ENCODE measurements at regions of chr6 and their contacts with region 1.

Region 1: DNA sequence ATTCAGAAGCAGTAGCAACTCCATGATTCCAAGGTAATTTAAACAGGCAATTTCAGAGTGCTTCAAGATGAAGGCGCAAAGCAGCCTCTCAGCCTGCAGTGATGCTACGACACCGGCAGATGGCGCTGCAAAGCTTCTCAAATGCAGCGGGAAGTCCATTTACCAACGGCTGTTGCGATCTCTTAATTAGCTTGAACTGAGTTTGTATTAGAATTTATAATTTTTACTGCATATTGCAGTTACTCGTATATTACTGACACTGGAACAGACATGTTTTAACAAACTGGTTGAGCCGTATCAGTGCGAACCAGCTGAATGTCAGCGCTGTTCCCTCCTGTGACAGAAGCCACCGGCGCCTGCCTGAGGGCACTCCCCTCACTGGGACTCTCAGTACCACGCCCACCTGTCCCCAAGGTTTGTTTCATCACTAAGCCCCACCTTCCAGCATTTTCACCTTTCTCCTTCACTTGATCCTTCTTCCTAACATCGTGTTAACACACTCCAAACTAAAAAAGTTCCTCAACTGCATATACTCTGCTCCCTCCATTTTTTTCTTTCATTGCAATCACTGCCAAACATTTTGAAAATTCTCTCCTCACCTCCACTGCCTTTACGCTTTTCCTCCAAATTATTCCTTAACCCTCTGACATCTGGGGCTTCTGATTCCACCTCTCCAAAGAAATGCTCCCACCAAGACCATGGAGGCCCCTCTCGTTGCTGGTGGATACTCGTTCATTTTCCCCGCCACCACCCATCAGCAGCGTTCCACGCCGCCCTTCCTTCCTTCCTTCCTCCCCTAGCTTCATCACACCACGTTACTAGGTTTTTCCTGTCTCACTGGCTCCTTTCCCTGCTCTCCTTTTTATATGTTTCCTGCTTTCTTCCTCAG is 14.5 kb downstream of the GNL1 start:
- DNase-seq: peak; percentile 86 to 93 (median 92)
- H3K4me3 ChIP-seq: peak overlapping the region; percentile 31 to 84 (median 66)
- H3K27ac ChIP-seq: no peak overlapping the region
- H3K4me1 ChIP-seq: peaks cover 8 to 20% (median 15%) of the 10 kb centered on the region in 4 experiments
- H3K27me3 ChIP-seq: no peaks in the 10 kb centered on the region

Region 2: GRCh38 chr6:30483677-30484279 is 58.0 kb before region 1 on chr6:
- CTCF ChIA-PET with region 1: interaction called, 259 read pairs
- POLR2A ChIA-PET with region 1: interaction called, 3 read pairs
- DNase-seq: peak; percentile 68 to 79 (median 71)
- H3K4me3 ChIP-seq: no peak overlapping the region
- H3K27ac ChIP-seq: no peak overlapping the region
- H3K4me1 ChIP-seq: peaks cover 7 to 28% (median 19%) of the 10 kb centered on the region in 4 experiments
- H3K27me3 ChIP-seq: peaks cover 4 to 42% (median 26%) of the 10 kb centered on the region in 5 experiments

Region 3: GRCh38 chr6:30500421-30501355 is 41.1 kb before region 1 on chr6:
- CTCF ChIA-PET with region 1: interaction called, 151 read pairs
- POLR2A ChIA-PET with region 1: interaction called, 3 read pairs
- DNase-seq: peak in 1 of 3 donors; percentile 45
- H3K4me3 ChIP-seq: peak overlapping the region in 1 of 7 experiments; percentile 1
- H3K27ac ChIP-seq: no peak overlapping the region
- H3K4me1 ChIP-seq: peaks cover 6 to 33% (median 22%) of the 10 kb centered on the region in 4 experiments
- H3K27me3 ChIP-seq: no peaks in the 10 kb centered on the region

Region 4: DNA sequence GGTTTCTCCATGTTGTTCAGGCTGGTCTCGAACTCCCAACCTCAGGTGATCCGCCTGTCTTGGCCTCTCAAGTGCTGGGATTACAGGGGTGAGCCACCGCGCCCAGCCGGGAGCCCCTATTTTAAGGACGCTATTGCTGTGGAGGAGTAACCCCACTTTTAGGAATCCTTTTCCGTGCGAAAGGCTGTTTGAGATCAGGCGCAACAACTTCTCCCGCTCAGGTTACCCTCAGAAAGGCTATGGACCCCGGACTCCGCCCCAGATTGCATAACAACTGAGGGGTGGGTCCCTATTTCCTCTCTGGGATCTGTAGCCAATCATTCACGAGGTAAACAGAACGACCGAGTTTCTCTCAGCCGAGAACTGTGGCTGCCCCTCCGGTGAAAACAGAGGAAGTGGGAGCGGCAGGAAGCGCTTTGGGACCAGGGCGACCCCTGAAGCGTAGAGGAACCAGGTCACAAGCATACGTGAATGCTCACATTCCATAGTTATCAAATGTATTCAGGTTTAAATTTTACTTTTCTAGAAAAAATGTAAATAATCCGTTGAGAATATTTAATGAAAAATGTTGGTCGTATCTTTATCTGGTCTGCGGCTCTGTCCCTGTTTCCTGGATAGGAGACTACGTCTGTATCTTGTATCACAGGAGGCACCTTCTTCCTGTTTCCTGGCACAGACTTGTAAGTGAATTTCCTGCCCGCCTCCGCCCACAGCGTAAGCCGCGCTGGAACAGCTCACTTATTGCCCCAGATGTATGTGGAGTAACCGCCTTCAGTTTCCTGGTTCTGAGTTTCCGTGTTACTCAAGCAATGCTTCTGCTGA is 25.6 kb before region 1 on chr6:
- CTCF ChIA-PET with region 1: interaction called, 35 read pairs
- POLR2A ChIA-PET with region 1: interaction called, 8 read pairs
- DNase-seq: peak; percentile 100
- H3K4me3 ChIP-seq: peak overlapping the region; percentile 14 to 76 (median 53)
- H3K27ac ChIP-seq: peak overlapping the region; percentile 98 to 99
- H3K4me1 ChIP-seq: peaks cover 8 to 62% (median 44%) of the 10 kb centered on the region in 4 experiments
- H3K27me3 ChIP-seq: no peaks in the 10 kb centered on the region

Region 5: DNA sequence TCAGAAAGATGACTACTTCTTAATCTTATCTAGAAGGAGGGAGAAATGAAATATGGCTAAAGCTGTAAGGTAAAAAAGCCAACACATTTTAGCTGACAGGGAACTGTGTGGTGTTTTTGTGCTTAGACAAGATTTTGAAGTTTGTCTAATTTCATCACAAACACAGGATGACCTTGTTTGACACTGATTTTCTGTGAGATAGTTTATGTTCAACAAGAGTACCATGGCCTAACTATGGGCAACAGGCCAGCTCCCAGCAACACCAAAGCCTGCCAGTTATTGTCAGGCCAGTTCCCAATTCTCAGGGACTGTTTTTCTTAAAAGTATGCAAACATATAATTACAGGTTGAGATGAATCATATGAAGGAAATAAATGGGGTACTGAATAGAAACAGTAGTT is 24.0 kb after region 1 on chr6:
- CTCF ChIA-PET with region 1: interaction called, 17 read pairs
- POLR2A ChIA-PET with region 1: interaction called, 7 read pairs
- DNase-seq: no peak
- H3K4me3 ChIP-seq: no peak overlapping the region
- H3K27ac ChIP-seq: no peak overlapping the region
- H3K4me1 ChIP-seq: peaks cover 6 to 9% (median 8%) of the 10 kb centered on the region in 4 experiments
- H3K27me3 ChIP-seq: no peaks in the 10 kb centered on the region

Region 6: DNA sequence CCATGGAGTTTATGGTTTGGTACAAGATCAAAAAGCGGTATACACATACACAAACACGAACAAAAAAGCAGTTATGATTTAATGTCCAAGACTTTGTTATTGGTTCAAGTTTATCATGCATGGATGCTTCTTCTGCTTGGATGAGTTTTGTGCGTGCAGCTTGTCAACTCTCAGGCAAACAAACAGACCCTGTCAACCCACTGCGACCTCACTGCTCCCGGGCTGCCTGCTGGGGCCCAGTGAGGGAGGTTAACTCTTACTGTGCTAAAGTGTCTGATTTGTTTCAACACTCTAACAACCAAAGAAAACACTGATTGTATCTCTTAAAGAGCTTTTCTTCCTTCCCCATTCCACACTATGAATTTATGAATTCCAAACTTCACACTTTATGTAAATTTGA is 315.8 kb after region 1 on chr6:
- CTCF ChIA-PET with region 1: no interaction called
- POLR2A ChIA-PET with region 1: no interaction called
- DNase-seq: peak in 1 of 3 donors; percentile 12
- H3K4me3 ChIP-seq: no peak overlapping the region
- H3K27ac ChIP-seq: no peak overlapping the region
- H3K4me1 ChIP-seq: no peaks in the 10 kb centered on the region
- H3K27me3 ChIP-seq: peaks cover 0 to 4% (median 0%) of the 10 kb centered on the region in 5 experiments

Region 7: DNA sequence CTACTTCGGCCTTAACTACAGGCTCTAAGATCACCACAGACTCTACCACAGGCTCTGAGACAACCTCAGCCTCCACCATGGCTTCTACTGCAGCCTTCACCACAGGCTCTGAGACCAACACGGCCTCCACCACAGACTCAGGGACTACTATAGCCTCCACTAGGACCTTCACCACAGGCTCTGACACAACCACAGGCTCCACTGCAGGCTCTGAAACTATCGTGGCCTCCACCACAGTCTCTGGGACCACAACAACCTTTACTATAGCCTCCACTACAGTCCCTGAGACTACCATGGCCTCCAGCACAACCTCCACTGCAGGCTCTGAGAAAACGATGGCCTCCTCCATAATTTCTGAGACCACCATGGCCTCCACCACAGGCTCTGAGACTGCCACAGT is 483.8 kb after region 1 on chr6:
- CTCF ChIA-PET with region 1: no interaction called
- POLR2A ChIA-PET with region 1: no interaction called
- DNase-seq: no peak
- H3K4me3 ChIP-seq: no peak overlapping the region
- H3K27ac ChIP-seq: no peak overlapping the region
- H3K4me1 ChIP-seq: no peaks in the 10 kb centered on the region
- H3K27me3 ChIP-seq: peaks cover 0 to 32% (median 3%) of the 10 kb centered on the region in 5 experiments

Measured in common myeloid progenitor, CD34-positive (primary cell).